Mammary epithelial cell (primary cell): ENCODE measurements at regions of chr2 and their contacts with region 1.

Region 1: GRCh38 chr2:120680136-120680761 is 55.4 kb upstream of the GLI2 start:
- DNase-seq: peak; percentile 67
- H3K4me3 ChIP-seq: no peak overlapping the region
- H3K27ac ChIP-seq: no peak overlapping the region
- H3K4me1 ChIP-seq: no peaks in the 10 kb centered on the region
- H3K27me3 ChIP-seq: no peaks in the 10 kb centered on the region
- CTCF ChIP-seq: peak; percentile 55 to 71

Region 2: GRCh38 chr2:120109186-120110061 is 570.8 kb before region 1 on chr2:
- CTCF ChIA-PET with region 1: interaction called, 13 read pairs
- dilution Hi-C with region 1: no loop called
- in situ Hi-C with region 1: no loop called
- intact Hi-C with region 1: loop called (anchors 2 kb)
- DNase-seq: peak; percentile 36
- H3K4me3 ChIP-seq: no peak overlapping the region
- H3K27ac ChIP-seq: peak overlapping the region; percentile 50
- H3K4me1 ChIP-seq: peaks cover 26% of the 10 kb centered on the region
- H3K27me3 ChIP-seq: no peaks in the 10 kb centered on the region
- CTCF ChIP-seq: peak; percentile 48 to 54

Region 3: DNA sequence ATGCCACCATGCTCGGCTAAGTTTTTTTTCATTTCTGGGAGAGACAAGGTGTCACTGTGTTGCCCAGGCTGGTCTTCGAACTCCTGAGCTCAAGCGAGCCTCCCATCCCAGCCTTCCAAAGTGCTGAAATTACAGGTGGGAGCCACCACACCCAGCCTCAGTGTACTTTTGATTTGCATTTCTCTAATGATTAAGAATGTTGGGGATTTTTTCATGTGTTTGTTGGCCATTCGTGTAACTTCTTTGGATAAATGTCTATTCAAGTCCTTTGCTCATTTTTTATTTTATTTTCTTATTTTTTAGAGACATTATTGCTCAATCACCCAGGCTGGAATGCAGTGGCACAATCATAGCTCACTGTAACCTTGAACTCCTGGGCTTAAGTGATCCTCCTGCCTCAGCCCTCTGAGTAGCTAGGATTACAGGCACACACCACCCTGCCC is 530.2 kb before region 1 on chr2:
- CTCF ChIA-PET with region 1: no interaction called
- dilution Hi-C with region 1: no loop called
- in situ Hi-C with region 1: no loop called
- intact Hi-C with region 1: no loop called
- DNase-seq: no peak
- H3K4me3 ChIP-seq: no peak overlapping the region
- H3K27ac ChIP-seq: no peak overlapping the region
- H3K4me1 ChIP-seq: no peaks in the 10 kb centered on the region
- H3K27me3 ChIP-seq: no peaks in the 10 kb centered on the region
- CTCF ChIP-seq: no peak

Region 4: DNA sequence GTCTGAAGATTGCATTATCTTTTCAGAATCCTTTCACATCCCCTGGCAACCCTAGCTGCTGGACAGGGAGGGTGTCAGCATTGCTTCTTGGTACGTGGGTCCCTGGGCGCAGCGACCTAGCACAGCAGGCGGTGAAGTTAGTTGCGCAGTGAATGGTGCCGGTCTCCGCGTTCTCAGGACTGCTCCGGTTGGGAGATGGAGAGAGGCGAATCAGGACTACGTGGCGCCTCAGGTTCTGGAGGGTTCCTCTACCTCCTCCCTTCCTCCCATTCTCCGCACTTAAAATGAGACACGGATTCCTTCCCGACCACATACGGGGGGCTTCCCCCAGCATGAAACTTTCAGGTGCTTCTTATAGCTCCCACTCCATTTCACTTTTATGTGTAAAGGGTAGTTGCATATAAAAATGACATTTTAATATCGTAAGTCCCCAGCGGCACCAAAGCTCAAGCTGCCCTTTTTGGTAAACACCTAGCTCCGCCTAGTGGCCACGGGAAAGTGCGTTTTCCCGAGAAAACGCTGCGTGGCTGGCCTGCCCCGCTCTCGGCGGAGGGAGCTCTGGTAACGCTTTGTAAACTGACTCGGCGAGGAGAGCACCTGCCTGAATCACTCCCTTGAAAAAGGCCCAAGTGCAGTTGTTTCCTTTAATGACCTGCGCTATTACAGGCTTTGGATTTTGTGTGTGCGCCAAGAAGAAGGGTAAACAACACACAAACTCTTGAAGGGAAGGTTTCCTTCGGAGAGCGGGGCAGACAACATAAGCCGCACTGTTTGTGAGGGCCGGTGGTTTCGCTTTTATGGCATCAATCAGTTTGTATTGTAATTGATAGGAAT is 367.2 kb before region 1 on chr2:
- CTCF ChIA-PET with region 1: no interaction called
- dilution Hi-C with region 1: no loop called
- in situ Hi-C with region 1: no loop called
- intact Hi-C with region 1: loop called (anchors 1 kb)
- DNase-seq: peak; percentile 74
- H3K4me3 ChIP-seq: peak overlapping the region; percentile 41 to 45 (median 42)
- H3K27ac ChIP-seq: no peak overlapping the region
- H3K4me1 ChIP-seq: peaks cover 4% of the 10 kb centered on the region
- H3K27me3 ChIP-seq: no peaks in the 10 kb centered on the region
- CTCF ChIP-seq: peak; percentile 79 to 93

Region 5: GRCh38 chr2:120436885-120437603 is 243.2 kb before region 1 on chr2:
- CTCF ChIA-PET with region 1: no interaction called
- dilution Hi-C with region 1: no loop called
- in situ Hi-C with region 1: no loop called
- intact Hi-C with region 1: loop called (anchors 1 kb)
- DNase-seq: peak; percentile 54
- H3K4me3 ChIP-seq: no peak overlapping the region
- H3K27ac ChIP-seq: no peak overlapping the region
- H3K4me1 ChIP-seq: peaks cover 4% of the 10 kb centered on the region
- H3K27me3 ChIP-seq: peaks cover 5% of the 10 kb centered on the region
- CTCF ChIP-seq: peak; percentile 66 to 74

Region 6: DNA sequence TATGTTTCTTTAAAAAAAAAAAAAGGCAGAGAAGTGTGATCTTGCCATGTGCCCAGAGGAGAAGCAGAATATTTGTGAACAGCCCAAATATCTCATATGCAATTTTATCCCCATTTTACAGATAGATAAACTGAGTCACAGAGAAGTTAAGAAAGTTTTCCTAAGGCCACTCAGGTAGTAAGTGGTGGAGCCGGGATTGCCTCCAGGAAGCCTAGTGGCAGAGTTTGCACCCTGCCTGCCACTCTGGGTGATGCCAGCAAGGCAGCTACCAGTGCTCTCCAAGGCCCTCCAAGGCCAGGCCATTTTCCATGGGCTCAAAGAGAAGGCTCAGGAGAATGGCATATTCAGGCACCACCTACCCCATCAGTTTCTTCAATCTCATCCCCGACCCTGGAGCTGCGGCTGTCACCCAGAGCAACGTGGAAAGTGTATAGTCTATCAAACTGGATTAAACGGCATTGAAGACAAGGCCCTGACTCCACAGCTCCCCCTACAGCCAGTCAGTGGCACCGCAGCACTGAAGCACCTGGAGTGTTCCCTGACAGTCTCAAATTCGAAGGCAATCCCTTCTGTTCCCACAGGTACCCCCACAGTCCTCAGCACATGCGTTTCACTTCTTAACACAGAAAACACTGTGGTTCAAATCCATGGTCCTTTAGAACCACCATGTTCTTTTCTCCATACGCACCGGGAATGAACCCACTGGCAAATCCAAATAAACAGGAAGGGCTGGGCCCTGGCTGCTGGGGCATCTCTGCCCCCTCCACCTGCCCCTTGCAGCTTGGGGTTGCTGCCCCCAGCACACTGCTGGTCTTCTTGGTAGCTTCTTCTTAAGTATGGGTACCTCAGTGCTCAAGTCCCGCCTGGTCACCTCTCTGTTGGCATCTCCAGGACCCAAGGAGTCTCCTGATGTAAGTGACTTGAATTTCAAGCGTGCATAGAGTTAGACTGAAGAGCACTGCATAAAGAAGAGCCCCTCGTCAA is 159.0 kb before region 1 on chr2:
- CTCF ChIA-PET with region 1: no interaction called
- dilution Hi-C with region 1: no loop called
- in situ Hi-C with region 1: no loop called
- intact Hi-C with region 1: loop called (anchors 1 kb)
- DNase-seq: peak; percentile 24
- H3K4me3 ChIP-seq: no peak overlapping the region
- H3K27ac ChIP-seq: no peak overlapping the region
- H3K4me1 ChIP-seq: no peaks in the 10 kb centered on the region
- H3K27me3 ChIP-seq: no peaks in the 10 kb centered on the region
- CTCF ChIP-seq: peak; percentile 89 to 98

Region 7: DNA sequence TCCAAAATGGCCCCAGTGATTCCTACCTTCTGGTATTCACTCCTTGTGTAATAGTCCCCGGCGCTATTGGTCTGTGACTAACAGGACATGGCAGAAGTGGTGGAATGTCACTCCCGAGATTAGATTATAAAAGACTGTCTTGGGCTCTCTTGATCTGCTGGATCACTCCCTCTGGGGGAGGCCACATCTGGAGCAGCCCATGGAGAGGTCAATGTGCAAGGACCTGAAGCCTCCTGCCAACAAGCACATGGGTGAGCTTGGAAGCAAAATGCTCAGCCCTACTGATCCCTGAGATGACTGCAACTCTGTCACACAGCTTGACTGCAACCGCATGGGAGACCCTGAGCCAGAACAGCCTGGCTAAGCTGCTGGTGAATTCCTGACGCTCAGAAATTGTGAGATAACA is 38.9 kb before region 1 on chr2:
- CTCF ChIA-PET with region 1: no interaction called
- dilution Hi-C with region 1: no loop called
- in situ Hi-C with region 1: no loop called
- intact Hi-C with region 1: no loop called
- DNase-seq: no peak
- H3K4me3 ChIP-seq: no peak overlapping the region
- H3K27ac ChIP-seq: no peak overlapping the region
- H3K4me1 ChIP-seq: no peaks in the 10 kb centered on the region
- H3K27me3 ChIP-seq: no peaks in the 10 kb centered on the region
- CTCF ChIP-seq: no peak